ENCODE measurements at regions of chr18 and their contacts with region 1.

Region 1: DNA sequence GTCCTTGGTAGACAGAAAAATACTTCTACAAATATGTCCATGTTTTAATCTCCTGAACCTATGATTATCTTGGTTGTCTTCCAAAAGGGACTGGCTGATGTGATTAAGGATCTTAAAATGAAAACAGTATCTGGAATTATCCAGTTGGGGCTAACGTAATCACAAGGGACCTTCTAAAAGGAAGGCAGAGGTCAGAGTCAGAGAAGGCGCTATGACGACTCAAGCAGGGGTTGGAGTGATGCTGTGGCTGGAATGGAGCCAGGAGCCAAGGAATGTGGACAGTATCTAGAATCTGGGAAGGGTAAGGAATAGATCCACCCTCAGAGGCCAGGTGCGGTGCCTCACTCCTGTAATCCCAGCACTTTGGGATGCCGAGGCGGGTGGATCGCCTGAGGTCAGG is 4.2 kb upstream of the USP14 start:
- DNase-seq: no peak
- H3K4me3 ChIP-seq: no peak overlapping the region
- H3K27ac ChIP-seq: no peak overlapping the region
- H3K4me1 ChIP-seq: peaks cover 0 to 12% (median 2%) of the 10 kb centered on the region in 6 donors
- H3K27me3 ChIP-seq: peaks cover 0 to 24% (median 0%) of the 10 kb centered on the region in 7 donors
- CTCF ChIP-seq: no peak
- POLR2A ChIP-seq: no peak

Region 2: GRCh38 chr18:267688-268552 is 113.8 kb after region 1 on chr18 and contains the start of gene THOC1:
- intact Hi-C with region 1: loop called (anchors 5 kb)
- DNase-seq: peak; percentile 99
- H3K4me3 ChIP-seq: peak within 1 kb of the TSS; percentile 68 to 97 (median 90)
- H3K27ac ChIP-seq: peak within 1 kb of the TSS; percentile 84 to 95 (median 94)
- H3K4me1 ChIP-seq: peaks cover 13 to 52% (median 29%) of the 10 kb centered on the region in 6 donors
- H3K27me3 ChIP-seq: no peaks in the 10 kb centered on the region
- CTCF ChIP-seq: peak in 1 of 11 experiments; percentile 20
- POLR2A ChIP-seq: peak in 1 of 3 donors; percentile 70
- total RNA-seq, gene THOC1: 36.3 to 91.9 (median 53.2) TPM

Region 3: DNA sequence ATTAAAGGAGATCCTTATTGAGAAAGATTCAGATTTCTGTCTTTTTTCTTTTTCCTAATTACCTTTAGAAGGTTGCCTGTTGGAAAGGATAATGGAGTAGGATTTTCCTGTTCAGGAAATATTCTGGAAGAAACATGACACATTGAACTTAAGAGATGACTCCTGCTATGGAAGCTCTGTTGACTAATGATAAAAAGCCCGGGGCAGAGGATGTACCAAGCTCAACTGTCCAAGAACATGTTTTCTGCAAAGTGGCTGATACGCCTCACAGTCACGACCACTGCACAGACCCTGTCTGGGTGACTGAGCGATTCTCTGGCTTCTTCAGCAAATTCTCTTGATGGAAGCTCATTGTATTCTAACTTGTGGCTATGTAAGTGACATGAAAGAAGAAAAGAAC is 199.9 kb after region 1 on chr18:
- intact Hi-C with region 1: no loop called
- DNase-seq: no peak
- H3K4me3 ChIP-seq: no peak overlapping the region
- H3K27ac ChIP-seq: no peak overlapping the region
- H3K4me1 ChIP-seq: no peaks in the 10 kb centered on the region
- H3K27me3 ChIP-seq: no peaks in the 10 kb centered on the region
- CTCF ChIP-seq: no peak
- POLR2A ChIP-seq: no peak

Region 4: DNA sequence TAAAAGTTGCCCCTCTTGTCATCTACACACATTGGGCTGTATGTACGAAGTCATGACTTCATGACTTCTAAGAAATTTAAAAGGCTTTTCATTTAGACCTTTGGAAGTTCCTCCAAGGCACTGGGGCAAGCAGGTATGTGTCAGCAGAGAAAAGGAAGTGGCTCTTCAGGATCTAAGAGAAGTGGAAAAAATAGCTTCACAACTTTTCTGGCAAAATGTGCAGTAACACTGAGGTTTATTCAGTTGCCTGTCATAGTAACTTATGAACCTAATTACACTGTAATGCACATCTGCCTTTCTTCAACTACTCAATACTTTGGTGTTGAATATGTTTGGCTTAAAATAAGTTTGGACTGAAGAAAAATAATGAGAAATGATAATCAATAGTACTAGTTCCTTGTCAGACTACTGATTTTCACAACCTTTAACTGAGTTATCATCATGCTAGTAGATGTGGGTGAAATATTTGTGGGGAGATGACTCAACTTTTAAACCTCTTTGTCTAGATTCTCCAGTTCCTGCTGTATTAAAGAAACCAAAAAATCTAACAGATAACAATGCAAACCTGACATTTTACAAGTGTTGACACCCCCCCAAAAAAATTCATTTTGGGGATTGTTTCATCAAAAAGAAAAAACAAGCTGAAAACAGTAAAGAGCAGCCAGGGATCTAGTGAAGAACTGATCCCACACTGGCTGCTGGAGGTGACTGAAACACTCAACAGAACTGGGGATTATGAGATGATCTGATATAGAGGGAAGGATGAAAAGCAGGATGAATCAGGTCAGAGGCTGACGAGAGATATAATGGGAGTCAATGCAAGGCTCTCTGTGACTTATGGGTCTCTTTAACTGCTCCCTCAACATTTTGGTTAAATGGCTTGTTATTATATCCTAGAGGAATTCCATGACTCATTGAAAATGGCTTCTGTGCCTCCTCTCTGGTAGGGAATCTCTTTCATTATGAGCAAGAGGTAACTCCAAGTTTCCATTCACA is 261.8 kb after region 1 on chr18:
- intact Hi-C with region 1: no loop called
- DNase-seq: no peak
- H3K4me3 ChIP-seq: no peak overlapping the region
- H3K27ac ChIP-seq: no peak overlapping the region
- H3K4me1 ChIP-seq: no peaks in the 10 kb centered on the region
- H3K27me3 ChIP-seq: no peaks in the 10 kb centered on the region
- CTCF ChIP-seq: no peak
- POLR2A ChIP-seq: no peak

Measured in spleen (tissue), 13 donors.